Endothelial cell of umbilical vein (primary cell): ENCODE measurements at regions of chr11 and their contacts with region 1.

Region 1: DNA sequence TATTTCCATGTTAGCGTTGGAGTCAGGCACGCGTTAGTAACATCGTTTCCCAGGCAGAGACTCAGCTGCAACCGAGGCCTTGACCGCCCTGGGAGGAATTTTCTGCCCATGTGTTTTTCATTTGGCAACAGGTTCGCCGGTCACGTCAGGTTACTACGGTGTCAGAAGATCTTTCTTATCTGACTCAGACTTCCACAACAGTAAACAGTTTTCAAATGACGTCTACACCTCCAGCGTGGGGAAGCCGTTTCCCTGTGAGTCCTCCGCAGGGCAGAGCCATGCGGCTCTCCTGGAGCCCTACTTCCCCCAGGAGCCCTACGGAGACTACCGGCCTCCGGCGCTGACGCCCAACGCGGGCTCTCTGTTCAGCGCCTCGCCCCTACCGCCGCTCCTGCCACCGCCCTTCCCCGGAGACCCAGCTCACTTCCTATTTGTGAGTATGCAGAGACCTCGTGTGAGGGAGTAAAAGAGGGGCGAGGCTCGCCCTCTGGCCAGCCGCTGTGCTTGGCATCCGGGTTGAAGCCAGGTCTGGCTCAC is 14.3 kb upstream of the POU2AF3 start:
- DNase-seq: no peak
- H3K4me3 ChIP-seq: no peak overlapping the region
- H3K27ac ChIP-seq: no peak overlapping the region
- H3K4me1 ChIP-seq: no peaks in the 10 kb centered on the region
- H3K27me3 ChIP-seq: peaks cover 1 to 2% of the 10 kb centered on the region in 2 experiments
- CTCF ChIP-seq: no peak
- POLR2A ChIP-seq: no peak

Region 2: DNA sequence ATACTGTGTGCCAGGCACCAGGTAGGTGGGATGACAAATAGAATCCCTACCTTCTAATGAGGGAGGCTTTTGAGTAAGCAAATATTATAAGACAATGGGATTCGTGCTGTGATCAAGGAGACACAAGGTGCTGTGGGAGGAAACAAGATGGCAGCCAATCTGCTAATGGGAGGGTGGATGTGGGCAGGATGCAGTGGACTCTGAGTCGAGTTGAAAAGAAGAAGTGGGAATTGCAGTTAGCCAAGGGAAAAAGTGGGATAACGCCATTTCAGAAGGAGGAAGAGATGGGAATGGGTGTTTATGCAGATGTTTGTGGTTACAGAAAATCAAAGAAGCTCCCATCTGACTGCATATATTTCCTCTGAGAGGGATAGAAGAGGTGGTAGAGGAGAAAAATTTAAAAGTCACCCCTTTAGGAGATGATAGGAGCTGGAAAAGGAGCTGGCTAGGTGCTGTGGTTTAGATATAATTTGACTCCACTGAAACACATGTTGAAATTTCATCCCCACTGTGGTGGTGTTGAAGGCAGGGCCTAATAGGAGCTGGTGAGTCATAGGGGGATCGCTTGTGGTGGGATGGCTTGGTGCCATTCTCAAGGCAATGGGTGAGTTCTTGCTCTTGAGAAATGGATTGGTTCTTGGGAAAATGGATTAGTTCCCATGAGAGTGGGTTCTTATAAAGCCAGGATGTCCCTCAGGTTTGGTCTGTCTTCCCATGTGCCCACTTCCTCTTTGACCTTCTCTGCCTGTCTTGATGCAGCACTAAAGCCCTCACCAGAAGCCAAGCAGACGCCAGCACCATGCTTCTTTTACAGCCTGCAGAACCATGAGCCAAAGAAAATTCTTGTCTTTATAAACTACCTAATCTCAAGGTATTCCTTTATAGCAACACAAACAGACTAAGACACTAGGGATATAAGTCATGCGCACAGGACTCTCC is 125.0 kb after region 1 on chr11:
- CTCF ChIA-PET with region 1: no interaction called
- POLR2A ChIA-PET with region 1: no interaction called
- dilution Hi-C with region 1: no loop called
- intact Hi-C with region 1: no loop called
- DNase-seq: no peak
- H3K4me3 ChIP-seq: no peak overlapping the region
- H3K27ac ChIP-seq: no peak overlapping the region
- H3K4me1 ChIP-seq: no peaks in the 10 kb centered on the region
- H3K27me3 ChIP-seq: no peaks in the 10 kb centered on the region
- CTCF ChIP-seq: no peak
- POLR2A ChIP-seq: no peak

Region 3: GRCh38 chr11:111422494-111423249 is 138.7 kb after region 1 on chr11:
- CTCF ChIA-PET with region 1: interaction called, 45 read pairs
- POLR2A ChIA-PET with region 1: no interaction called
- dilution Hi-C with region 1: no loop called
- intact Hi-C with region 1: loop called (anchors 1 kb)
- DNase-seq: no peak
- H3K4me3 ChIP-seq: no peak overlapping the region
- H3K27ac ChIP-seq: no peak overlapping the region
- H3K4me1 ChIP-seq: no peaks in the 10 kb centered on the region
- H3K27me3 ChIP-seq: peaks cover 0 to 2% of the 10 kb centered on the region in 2 experiments
- CTCF ChIP-seq: peak; percentile 27 to 60
- POLR2A ChIP-seq: no peak

Region 4: DNA sequence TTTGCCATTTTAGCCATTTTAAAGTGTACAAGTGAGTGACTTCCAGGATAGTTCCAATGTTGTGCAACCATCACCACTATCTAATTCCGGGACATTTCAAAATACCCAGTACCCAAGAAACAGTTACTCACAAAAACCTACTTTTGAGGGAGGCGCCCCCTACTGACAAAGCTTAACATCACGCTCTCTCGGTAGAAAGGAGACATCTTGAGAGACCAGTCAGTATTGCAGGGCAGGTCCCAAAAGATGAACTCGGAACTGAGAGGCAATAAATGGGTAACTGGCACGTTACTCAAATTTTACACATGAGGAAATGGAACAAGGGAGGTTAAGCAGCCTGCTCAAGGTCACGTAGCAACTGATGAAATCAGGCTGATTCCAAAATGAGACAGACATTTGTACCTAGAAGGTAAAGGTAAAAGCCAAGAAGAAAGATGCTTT is 145.1 kb after region 1 on chr11:
- CTCF ChIA-PET with region 1: interaction called, 45 read pairs
- POLR2A ChIA-PET with region 1: no interaction called
- dilution Hi-C with region 1: no loop called
- intact Hi-C with region 1: loop called (anchors 1 kb)
- DNase-seq: peak; percentile 23
- H3K4me3 ChIP-seq: no peak overlapping the region
- H3K27ac ChIP-seq: no peak overlapping the region
- H3K4me1 ChIP-seq: no peaks in the 10 kb centered on the region
- H3K27me3 ChIP-seq: peaks cover 2 to 7% of the 10 kb centered on the region in 2 experiments
- CTCF ChIP-seq: peak; percentile 54
- POLR2A ChIP-seq: no peak

Region 5: GRCh38 chr11:111808063-111808588 is 524.1 kb after region 1 on chr11:
- CTCF ChIA-PET with region 1: no interaction called
- POLR2A ChIA-PET with region 1: no interaction called
- dilution Hi-C with region 1: no loop called
- intact Hi-C with region 1: no loop called
- DNase-seq: no peak
- H3K4me3 ChIP-seq: no peak overlapping the region
- H3K27ac ChIP-seq: no peak overlapping the region
- H3K4me1 ChIP-seq: no peaks in the 10 kb centered on the region
- H3K27me3 ChIP-seq: no peaks in the 10 kb centered on the region
- CTCF ChIP-seq: no peak
- POLR2A ChIP-seq: no peak